Activated T-helper 1 cell treated with anti-CD3 and anti-CD28 coated beads, Interleukin-12 subunit alpha, Interleukin-12 subunit beta, Interleukin-2, Interleukin-4 antibody, amounts not matched to agents 30 ng/mL and 10 ng/mL and 1 ng/mL, durations not matched to agents 14 hours and 24 hours and 36 hours (primary cell): ENCODE measurements at regions of chr20 and their contacts with region 1.

Region 1: DNA sequence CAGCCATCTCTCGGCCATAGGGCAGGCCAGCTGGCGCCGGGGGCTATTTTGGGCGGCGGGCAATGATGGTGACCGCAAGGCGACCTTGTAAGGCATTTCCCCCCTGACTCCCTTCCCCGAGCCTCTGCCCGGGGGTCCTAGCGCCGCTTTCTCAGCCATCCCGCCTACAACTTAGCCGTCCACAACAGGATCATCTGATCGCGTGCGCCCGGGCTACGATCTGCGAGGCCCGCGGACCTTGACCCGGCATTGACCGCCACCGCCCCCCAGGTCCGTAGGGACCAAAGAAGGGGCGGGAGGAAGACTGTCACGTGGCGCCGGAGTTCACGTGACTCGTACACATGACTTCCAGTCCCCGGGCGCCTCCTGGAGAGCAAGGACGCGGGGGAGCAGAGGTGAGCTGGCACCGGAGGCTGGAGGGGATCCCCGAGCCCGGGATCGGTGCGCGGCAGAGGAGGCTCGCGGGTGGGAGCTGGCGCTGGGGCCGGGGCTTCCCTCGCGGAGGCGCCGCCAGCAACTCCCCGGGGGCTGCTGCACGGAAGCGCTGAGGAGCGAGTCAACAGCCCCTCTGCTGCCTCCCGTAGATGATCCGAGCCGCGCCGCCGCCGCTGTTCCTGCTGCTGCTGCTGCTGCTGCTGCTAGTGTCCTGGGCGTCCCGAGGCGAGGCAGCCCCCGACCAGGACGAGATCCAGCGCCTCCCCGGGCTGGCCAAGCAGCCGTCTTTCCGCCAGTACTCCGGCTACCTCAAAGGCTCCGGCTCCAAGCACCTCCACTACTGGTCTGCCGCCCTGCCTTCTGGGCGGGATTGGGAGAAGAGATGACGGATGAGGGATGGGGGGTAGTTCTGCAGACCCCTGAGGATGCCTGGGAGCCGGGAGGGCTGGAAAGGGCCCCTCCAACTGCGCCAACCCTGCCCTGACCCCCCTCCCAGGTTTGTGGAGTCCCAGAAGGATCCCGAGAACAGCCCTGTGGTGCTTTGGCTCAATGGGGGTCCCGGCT is at the starts of genes CTSA and NEURL2:
- DNase-seq: peak; percentile 80
- H3K4me3 Mint-ChIP-seq: peak within 1 kb of the TSS; percentile 91
- H3K27ac Mint-ChIP-seq: peak within 1 kb of the TSS; percentile 85
- H3K4me1 Mint-ChIP-seq: peaks cover 14% of the 10 kb centered on the region
- H3K27me3 Mint-ChIP-seq: peaks cover 1% of the 10 kb centered on the region
- total RNA-seq, gene CTSA: 43.0 and 46.9 TPM in 2 replicates
- total RNA-seq, gene NEURL2: 1.9 and 3.4 TPM in 2 replicates

Region 2: GRCh38 chr20:45798935-45799642 is 92.2 kb before region 1 on chr20:
- intact Hi-C with region 1: loop called (anchors 2 kb)
- DNase-seq: peak; percentile 64
- H3K4me3 Mint-ChIP-seq: no peak overlapping the region
- H3K27ac Mint-ChIP-seq: peak overlapping the region; percentile 4
- H3K4me1 Mint-ChIP-seq: peaks cover 20% of the 10 kb centered on the region
- H3K27me3 Mint-ChIP-seq: no peaks in the 10 kb centered on the region

Region 3: GRCh38 chr20:45812157-45813020 is 78.9 kb before region 1 on chr20 and contains the start of gene UBE2C:
- intact Hi-C with region 1: loop called (anchors 1 kb)
- DNase-seq: peak; percentile 95
- H3K4me3 Mint-ChIP-seq: peak within 1 kb of the TSS; percentile 89
- H3K27ac Mint-ChIP-seq: peak within 1 kb of the TSS; percentile 82
- H3K4me1 Mint-ChIP-seq: peaks cover 35% of the 10 kb centered on the region
- H3K27me3 Mint-ChIP-seq: no peaks in the 10 kb centered on the region
- total RNA-seq, gene UBE2C: 114 and 118 TPM in 2 replicates

Region 4: DNA sequence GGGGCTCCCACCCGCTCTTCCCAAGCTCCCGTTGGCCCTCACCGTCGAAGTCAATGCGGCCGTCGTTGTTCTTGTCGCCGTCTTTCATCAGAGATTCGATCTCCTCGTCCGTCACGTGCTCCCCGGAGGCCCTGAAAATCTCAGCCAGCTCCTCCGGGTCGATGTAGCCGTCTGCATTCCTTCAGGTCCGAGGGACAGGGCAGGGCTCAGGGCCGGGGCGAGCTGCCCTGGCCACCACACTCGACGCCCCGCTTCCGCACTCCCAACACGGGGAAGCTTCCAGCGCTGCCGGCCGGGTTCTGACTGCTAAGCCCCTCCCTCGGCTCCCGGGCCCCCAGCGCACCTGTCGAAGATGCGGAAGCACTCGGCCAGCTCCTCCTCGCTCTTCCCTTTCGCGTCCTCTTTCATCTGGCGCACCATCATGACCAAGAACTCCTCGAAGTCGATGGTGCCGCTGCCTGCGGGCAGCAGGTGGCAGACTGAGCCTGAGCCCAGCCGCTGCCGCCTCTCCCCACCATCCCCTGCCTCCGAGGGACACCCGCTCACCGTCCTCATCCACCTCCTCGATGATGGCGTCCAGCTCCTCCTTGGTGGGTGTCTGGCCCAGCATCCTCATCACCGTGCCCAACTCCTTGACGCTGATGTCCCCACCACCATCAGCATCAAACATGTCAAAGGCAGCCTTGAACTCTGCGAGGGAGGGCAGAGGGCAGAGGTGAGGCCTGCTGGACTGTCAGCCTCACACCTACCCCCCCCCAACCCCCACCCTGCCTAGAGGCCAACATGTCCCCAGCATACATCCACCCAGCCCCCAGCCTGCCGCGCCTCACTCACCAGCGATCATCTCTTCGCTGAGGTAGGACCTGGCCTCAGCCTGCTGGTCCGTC is 67.1 kb before region 1 on chr20:
- intact Hi-C with region 1: loop called (anchors 2 kb)
- DNase-seq: peak; percentile 28
- H3K4me3 Mint-ChIP-seq: peak overlapping the region; percentile 68
- H3K27ac Mint-ChIP-seq: no peak overlapping the region
- H3K4me1 Mint-ChIP-seq: peaks cover 23% of the 10 kb centered on the region
- H3K27me3 Mint-ChIP-seq: peaks cover 37% of the 10 kb centered on the region

Region 5: DNA sequence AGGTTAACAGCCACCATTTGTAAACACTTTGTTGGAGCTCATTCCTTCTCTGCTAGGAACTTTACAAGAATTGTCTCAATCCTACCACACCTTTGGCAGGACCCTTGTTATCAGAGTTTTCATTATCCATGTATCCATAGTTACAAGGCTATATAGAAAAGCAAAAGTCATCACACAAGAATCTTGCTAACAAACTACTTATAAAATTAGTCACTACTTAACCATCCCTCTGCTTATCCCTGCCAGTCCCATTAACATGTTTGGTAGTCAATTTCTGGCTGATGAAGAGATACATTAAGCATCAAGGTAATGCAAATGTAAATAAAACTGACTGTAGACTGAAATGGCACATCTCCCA is 23.5 kb before region 1 on chr20:
- intact Hi-C with region 1: no loop called
- DNase-seq: no peak
- H3K4me3 Mint-ChIP-seq: no peak overlapping the region
- H3K27ac Mint-ChIP-seq: no peak overlapping the region
- H3K4me1 Mint-ChIP-seq: no peaks in the 10 kb centered on the region
- H3K27me3 Mint-ChIP-seq: no peaks in the 10 kb centered on the region

Region 6: GRCh38 chr20:45880988-45881788 is 10.1 kb before region 1 on chr20 and contains the start of gene ZSWIM1:
- intact Hi-C with region 1: loop called (anchors 1 kb)
- DNase-seq: peak; percentile 96
- H3K4me3 Mint-ChIP-seq: peak within 1 kb of the TSS; percentile 84
- H3K27ac Mint-ChIP-seq: peak within 1 kb of the TSS; percentile 72
- H3K4me1 Mint-ChIP-seq: peaks cover 45% of the 10 kb centered on the region
- H3K27me3 Mint-ChIP-seq: peaks cover 2% of the 10 kb centered on the region
- total RNA-seq, gene ZSWIM1: 7.5 and 7.8 TPM in 2 replicates

Region 7: DNA sequence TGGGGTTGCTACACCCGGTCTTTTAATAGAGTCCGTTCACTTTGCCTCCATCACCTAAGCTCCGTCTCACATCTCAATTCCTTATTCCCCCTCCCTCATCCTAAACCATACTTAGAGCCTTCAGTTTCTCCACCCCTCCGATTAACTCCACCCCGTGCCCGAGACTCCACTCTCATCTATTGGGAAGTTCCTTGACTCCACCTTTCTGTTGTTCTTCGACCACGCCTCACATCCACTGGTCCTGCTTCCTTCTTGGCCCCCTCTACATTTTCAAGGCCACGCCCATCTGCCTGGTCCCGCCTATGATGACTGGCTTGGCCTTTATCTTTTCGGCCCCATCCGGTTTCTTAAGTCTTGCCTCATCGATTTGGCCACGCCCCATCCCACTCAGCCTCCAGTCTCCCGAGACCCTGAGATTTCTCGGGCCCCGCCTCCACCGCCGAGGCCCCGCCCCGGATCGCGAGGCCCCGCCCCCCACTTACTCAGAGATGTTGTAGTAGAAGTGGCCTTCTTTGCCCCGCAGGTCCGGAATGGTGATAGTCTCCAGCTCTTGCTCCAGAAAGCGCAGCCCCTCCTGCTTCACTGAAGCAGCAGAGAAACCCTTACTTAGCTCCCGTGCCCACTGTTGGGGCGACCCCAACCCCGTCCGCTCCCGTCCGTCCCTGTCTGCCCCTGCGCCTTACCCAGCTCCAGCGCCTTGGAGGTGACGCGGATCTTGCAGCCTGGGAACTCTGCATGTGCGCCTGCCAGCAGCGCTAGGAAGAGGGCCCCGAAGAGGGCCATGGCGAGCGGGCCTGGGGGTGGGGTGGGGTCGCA is 19.6 kb after region 1 on chr20:
- intact Hi-C with region 1: loop called (anchors 1 kb)
- DNase-seq: peak; percentile 81
- H3K4me3 Mint-ChIP-seq: peak overlapping the region; percentile 45
- H3K27ac Mint-ChIP-seq: peak overlapping the region; percentile 33
- H3K4me1 Mint-ChIP-seq: peaks cover 14% of the 10 kb centered on the region
- H3K27me3 Mint-ChIP-seq: peaks cover 14% of the 10 kb centered on the region

Region 8: GRCh38 chr20:45924391-45925261 is 33.3 kb after region 1 on chr20:
- intact Hi-C with region 1: no loop called
- DNase-seq: no peak
- H3K4me3 Mint-ChIP-seq: no peak overlapping the region
- H3K27ac Mint-ChIP-seq: no peak overlapping the region
- H3K4me1 Mint-ChIP-seq: peaks cover 5% of the 10 kb centered on the region
- H3K27me3 Mint-ChIP-seq: peaks cover 25% of the 10 kb centered on the region